Transverse colon (tissue), 4 donors: ENCODE measurements at regions of chr5 and their contacts with region 1.

Region 1: DNA sequence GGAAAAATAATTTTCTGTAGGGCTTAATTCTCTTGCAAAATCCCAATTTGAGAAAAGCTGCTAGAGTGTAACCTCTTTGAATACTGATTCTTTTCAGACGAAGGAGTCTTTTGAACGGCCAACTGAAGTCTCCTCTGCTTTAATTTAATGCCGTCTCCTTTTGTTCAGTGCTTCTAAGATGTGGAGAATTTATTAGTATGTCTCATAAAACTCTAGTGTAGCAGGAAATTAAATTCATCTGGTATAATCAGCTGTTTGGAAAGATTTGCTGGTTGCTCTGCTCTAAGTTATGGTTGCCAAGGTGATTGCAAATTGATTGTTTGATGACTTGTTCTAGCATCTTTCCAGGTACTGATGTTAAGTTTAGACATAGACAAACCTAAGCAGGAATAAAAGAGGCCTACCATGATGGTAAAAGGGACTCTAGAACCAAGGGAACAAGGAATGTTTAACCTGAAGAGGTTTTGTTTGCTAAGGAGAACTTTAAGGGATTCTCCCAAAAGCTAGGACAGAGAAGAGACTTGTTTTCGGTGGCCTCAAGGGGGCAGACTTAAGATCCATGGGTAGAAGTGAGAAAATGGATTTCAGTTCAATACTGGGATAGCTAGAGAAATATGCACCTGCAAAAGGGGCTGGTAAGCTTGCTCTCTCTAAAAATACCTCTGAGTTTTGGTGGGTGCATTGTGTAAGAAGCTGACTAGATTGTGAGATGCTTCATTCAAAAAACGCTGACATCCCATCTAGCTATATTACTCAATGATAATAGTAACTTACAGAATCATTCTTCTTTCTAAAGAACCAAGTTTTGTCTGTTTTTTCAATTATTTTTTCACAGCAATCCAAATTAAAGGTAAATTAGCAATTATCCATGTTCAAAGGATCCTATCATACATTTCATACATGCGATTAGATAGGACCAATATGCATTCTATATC is 5.7 kb upstream of the ADRB2 start:
- DNase-seq: no peak
- H3K4me3 ChIP-seq: no peak overlapping the region
- H3K27ac ChIP-seq: no peak overlapping the region
- H3K4me1 ChIP-seq: peaks cover 0 to 15% (median 2%) of the 10 kb centered on the region in 4 donors
- H3K27me3 ChIP-seq: no peaks in the 10 kb centered on the region
- CTCF ChIP-seq: peak; percentile 49 to 61 (median 53)
- EP300 ChIP-seq: no peak
- POLR2A ChIP-seq: no peak

Region 2: DNA sequence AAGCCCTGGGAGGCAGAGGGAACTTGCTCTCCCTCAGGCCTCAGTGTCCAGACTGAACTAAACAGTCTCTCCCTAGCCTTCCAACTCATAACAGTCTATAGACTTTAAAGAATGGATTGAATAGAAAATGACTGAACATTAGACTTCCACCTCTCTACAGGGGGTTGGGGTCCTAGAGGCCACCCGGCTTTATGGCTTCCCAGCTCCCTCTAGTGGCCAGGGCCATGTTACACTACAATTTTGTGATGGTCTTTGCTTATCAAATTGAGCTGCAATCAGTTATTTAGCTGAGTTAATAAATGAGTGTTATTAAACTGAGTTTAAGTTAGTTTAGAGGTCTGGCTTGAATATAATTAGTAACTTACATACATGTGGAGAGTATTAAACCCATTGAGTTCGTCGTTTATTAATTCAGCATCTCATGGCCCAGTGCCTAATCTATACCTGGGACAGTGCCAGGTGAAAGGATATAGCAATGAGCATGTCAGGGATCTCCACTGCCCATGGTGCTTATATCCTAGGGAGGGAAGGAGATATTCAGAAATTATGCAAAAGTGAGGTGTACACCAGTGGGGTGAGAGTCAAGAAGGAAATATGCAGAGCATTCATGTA is 137.0 kb after region 1 on chr5:
- in situ Hi-C with region 1: loop called in 1 of 4 experiments (anchors 25 kb)
- intact Hi-C with region 1: no loop called
- DNase-seq: peak; percentile 34
- H3K4me3 ChIP-seq: no peak overlapping the region
- H3K27ac ChIP-seq: no peak overlapping the region
- H3K4me1 ChIP-seq: no peaks in the 10 kb centered on the region
- H3K27me3 ChIP-seq: no peaks in the 10 kb centered on the region
- CTCF ChIP-seq: peak; percentile 72 to 76 (median 73)
- EP300 ChIP-seq: no peak
- POLR2A ChIP-seq: no peak

Region 3: GRCh38 chr5:149271716-149272563 is 451.2 kb after region 1 on chr5 and contains the start of gene AFAP1L1:
- in situ Hi-C with region 1: no loop called
- intact Hi-C with region 1: no loop called
- DNase-seq: peak; percentile 48
- H3K4me3 ChIP-seq: peak within 1 kb of the TSS; percentile 24 to 72 (median 50)
- H3K27ac ChIP-seq: peak within 1 kb of the TSS; percentile 36 to 60 (median 48)
- H3K4me1 ChIP-seq: peaks cover 0 to 15% (median 3%) of the 10 kb centered on the region in 4 donors
- H3K27me3 ChIP-seq: peaks cover 36% of the 10 kb centered on the region
- CTCF ChIP-seq: no peak
- EP300 ChIP-seq: no peak
- POLR2A ChIP-seq: no peak
- total RNA-seq, gene AFAP1L1: 2.2 to 4.1 (median 3.0) TPM